ENCODE measurements at regions of chr3 and their contacts with region 1.

Region 1: GRCh38 chr3:71955240-71956068 is 170.5 kb upstream of the PROK2 start:
- DNase-seq: peak; percentile 55 to 68
- ATAC-seq: peak; percentile 57

Region 2: DNA sequence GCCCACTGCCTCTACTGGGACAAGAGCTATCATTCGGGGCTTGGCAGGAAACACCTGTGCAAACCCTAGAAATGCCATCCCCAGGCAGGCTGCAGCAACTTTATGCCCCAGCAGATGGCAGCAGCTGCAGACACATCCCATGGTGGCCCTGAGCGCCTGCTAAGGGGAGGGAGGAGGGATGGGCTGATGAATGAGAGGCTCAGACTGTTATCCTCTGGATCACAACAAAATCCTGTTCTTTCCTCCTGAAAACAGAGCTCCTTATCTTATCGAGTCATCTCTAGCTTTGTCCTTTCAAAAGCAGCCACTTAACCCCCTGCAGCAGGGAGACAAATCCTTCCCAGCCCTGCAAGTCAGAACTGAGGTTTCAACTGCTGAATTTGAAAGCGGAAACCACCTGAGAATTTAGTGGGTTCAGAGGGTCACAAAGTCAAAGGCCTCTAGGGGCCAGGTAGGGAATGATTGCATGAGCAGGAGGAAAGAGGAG is 80.0 kb before region 1 on chr3:
- intact Hi-C with region 1: loop called in 1 of 2 experiments (anchors 5 kb)
- DNase-seq: peak; percentile 60 to 83
- ATAC-seq: peak; percentile 95

Region 3: GRCh38 chr3:72310419-72311380 is 355.2 kb after region 1 on chr3:
- intact Hi-C with region 1: no loop called
- DNase-seq: peak; percentile 65 to 75
- ATAC-seq: peak; percentile 98